ENCODE measurements at regions of chrX and their contacts with region 1.

Region 1: DNA sequence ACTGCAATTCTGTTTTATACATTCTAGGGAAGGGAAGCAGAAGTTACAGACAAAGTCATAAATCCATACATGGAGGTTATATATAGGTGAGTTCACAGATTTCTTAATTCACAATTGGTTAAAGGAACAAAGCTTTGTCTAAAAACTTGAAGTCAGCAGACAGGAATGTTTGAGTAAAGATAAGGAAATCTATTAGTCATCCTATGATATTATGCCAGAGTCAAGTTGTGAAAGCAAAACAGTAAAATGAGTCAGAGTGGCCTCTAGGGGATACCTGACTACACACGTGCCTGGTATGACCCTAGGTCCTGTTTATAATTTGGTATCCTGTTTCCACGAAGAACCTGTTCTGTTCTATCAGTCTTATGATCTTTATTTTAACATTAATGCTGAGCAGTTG is 31.5 kb downstream of the ACTRT1 start:
- DNase-seq: peak; percentile 92
- H3K4me3 ChIP-seq: no peak overlapping the region
- H3K27ac ChIP-seq: peak overlapping the region; percentile 89
- H3K4me1 ChIP-seq: peaks cover 18% of the 10 kb centered on the region
- H3K27me3 ChIP-seq: no peaks in the 10 kb centered on the region
- CTCF ChIP-seq: no peak
- POLR2A ChIP-seq: peak; percentile 34

Region 2: GRCh38 chrX:126557151-126557550 is 1463.6 kb before region 1 on chrX:
- CTCF ChIA-PET with region 1: no interaction called
- POLR2A ChIA-PET with region 1: no interaction called
- dilution Hi-C with region 1: no loop called
- intact Hi-C with region 1: loop called (anchors 2 kb)
- DNase-seq: peak; percentile 69
- H3K4me3 ChIP-seq: no peak overlapping the region
- H3K27ac ChIP-seq: peak overlapping the region; percentile 86
- H3K4me1 ChIP-seq: peaks cover 26% of the 10 kb centered on the region
- H3K27me3 ChIP-seq: no peaks in the 10 kb centered on the region
- CTCF ChIP-seq: no peak
- POLR2A ChIP-seq: no peak

Region 3: GRCh38 chrX:127877318-127877717 is 143.4 kb before region 1 on chrX:
- CTCF ChIA-PET with region 1: no interaction called
- POLR2A ChIA-PET with region 1: no interaction called
- dilution Hi-C with region 1: no loop called
- intact Hi-C with region 1: loop called (anchors 1 kb)
- DNase-seq: peak; percentile 67
- H3K4me3 ChIP-seq: no peak overlapping the region
- H3K27ac ChIP-seq: peak overlapping the region; percentile 66
- H3K4me1 ChIP-seq: peaks cover 19% of the 10 kb centered on the region
- H3K27me3 ChIP-seq: no peaks in the 10 kb centered on the region
- CTCF ChIP-seq: no peak
- POLR2A ChIP-seq: no peak

Region 4: DNA sequence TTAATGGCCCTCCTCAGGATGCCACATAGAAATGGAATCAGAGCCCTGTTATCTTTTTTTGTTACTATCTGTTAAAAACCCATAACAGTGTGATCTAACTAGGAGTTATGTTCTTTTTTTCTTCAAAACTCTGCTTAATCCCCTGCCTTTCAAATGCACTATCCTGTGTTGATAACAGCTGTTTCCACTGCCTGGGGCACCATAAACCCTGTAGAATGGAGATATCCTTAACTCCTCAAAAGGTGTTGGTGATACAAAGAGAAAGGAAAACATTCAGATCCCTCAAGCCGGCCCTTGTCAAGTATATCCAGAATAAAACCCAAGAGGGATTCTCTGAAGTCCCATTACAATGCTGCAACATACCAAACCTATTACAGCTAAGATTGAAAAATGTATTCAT is 77.1 kb before region 1 on chrX:
- CTCF ChIA-PET with region 1: no interaction called
- POLR2A ChIA-PET with region 1: no interaction called
- dilution Hi-C with region 1: no loop called
- intact Hi-C with region 1: loop called (anchors 1 kb)
- DNase-seq: no peak
- H3K4me3 ChIP-seq: no peak overlapping the region
- H3K27ac ChIP-seq: peak overlapping the region; percentile 45
- H3K4me1 ChIP-seq: peaks cover 5% of the 10 kb centered on the region
- H3K27me3 ChIP-seq: no peaks in the 10 kb centered on the region
- CTCF ChIP-seq: no peak
- POLR2A ChIP-seq: no peak

Region 5: GRCh38 chrX:128035318-128035717 is 14.6 kb after region 1 on chrX:
- CTCF ChIA-PET with region 1: interaction called, 7 read pairs
- POLR2A ChIA-PET with region 1: no interaction called
- dilution Hi-C with region 1: no loop called
- intact Hi-C with region 1: loop called (anchors 1 kb)
- DNase-seq: peak; percentile 76
- H3K4me3 ChIP-seq: no peak overlapping the region
- H3K27ac ChIP-seq: peak overlapping the region; percentile 99
- H3K4me1 ChIP-seq: peaks cover 20% of the 10 kb centered on the region
- H3K27me3 ChIP-seq: no peaks in the 10 kb centered on the region
- CTCF ChIP-seq: no peak
- POLR2A ChIP-seq: no peak

Region 6: DNA sequence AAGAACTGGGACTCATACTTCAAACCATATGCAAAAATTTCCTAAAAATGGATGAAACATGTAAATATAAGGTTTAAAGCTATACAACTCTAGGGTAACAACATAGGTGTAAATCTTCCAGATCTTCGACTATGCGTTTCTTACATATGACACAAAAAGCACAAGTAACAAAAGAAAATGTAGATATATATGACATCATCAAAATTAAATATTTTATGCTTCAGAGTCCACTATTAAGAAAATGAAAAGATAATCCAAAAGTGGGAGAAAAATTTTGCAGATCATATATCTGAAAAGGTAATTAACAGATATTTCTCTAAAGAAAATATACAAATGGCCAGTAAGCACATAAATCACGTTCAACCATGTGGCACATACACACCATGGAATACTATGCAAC is 195.7 kb after region 1 on chrX:
- CTCF ChIA-PET with region 1: no interaction called
- POLR2A ChIA-PET with region 1: no interaction called
- dilution Hi-C with region 1: no loop called
- intact Hi-C with region 1: loop called (anchors 5 kb)
- DNase-seq: no peak
- H3K4me3 ChIP-seq: no peak overlapping the region
- H3K27ac ChIP-seq: no peak overlapping the region
- H3K4me1 ChIP-seq: peaks cover 4% of the 10 kb centered on the region
- H3K27me3 ChIP-seq: no peaks in the 10 kb centered on the region
- CTCF ChIP-seq: no peak
- POLR2A ChIP-seq: no peak

Region 7: GRCh38 chrX:128365492-128365891 is 344.8 kb after region 1 on chrX:
- CTCF ChIA-PET with region 1: no interaction called
- POLR2A ChIA-PET with region 1: no interaction called
- dilution Hi-C with region 1: no loop called
- intact Hi-C with region 1: no loop called
- DNase-seq: no peak
- H3K4me3 ChIP-seq: no peak overlapping the region
- H3K27ac ChIP-seq: no peak overlapping the region
- H3K4me1 ChIP-seq: no peaks in the 10 kb centered on the region
- H3K27me3 ChIP-seq: no peaks in the 10 kb centered on the region
- CTCF ChIP-seq: no peak
- POLR2A ChIP-seq: no peak

Region 8: DNA sequence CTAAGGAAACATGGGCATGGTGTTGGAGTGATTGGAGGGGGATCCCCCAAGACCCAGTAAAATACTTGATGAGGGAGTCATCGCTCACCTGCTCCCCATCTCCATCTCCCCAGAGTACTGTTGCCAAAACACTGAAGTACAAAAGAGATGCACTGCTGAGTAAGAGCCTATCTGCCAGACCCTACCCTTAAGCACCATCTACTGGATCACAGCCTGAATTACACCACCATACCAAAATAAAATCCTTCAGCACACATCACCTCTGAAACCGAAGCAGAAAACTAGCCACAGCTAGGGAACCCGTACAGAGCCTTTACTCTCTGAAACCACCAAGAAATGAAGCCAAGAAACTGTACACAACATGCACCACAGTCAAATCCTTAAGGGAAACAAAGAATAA is 497.8 kb after region 1 on chrX:
- CTCF ChIA-PET with region 1: no interaction called
- POLR2A ChIA-PET with region 1: no interaction called
- dilution Hi-C with region 1: no loop called
- intact Hi-C with region 1: loop called (anchors 10 kb)
- DNase-seq: peak; percentile 33
- H3K4me3 ChIP-seq: no peak overlapping the region
- H3K27ac ChIP-seq: no peak overlapping the region
- H3K4me1 ChIP-seq: no peaks in the 10 kb centered on the region
- H3K27me3 ChIP-seq: no peaks in the 10 kb centered on the region
- CTCF ChIP-seq: peak; percentile 28 to 36
- POLR2A ChIP-seq: no peak